Dorsolateral prefrontal cortex (tissue), 120 donors: ENCODE measurements at regions of chr7 and their contacts with region 1.

Region 1: DNA sequence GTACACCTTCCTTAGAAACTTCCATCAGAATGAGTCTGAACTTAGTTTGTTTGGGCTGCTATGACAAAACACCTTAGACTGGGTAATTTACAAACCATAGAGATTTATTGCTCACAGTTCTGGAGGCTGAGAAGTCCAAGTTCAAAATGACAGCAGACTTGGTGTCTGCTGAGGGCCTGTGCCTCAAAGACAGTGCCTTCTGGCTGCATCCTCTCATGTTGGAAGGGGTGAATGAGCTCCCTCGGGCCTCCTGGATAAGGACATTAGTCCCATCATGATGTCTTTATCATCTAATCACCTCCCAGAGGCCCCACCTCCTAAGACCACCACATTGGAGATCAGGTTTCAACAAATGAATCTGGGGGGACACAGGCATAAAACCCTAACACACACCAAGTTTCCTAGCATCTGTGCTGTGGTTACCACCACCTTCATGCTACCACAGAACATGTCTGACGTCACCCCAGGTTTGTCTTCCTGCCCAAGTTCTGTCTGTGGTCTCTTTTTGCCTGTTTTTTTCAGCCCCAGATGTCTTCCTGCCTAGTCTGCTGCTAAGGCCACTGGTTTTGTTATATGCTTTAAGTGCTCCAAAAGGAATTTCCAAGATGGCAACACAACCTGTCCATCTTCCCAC is 150.9 kb upstream of the COBL start:
- DNase-seq: no peak
- H3K4me3 ChIP-seq: no peak overlapping the region
- H3K27ac ChIP-seq: no peak overlapping the region
- H3K27me3 ChIP-seq: peaks cover 0 to 4% (median 0%) of the 10 kb centered on the region in 45 donors
- CTCF ChIP-seq: no peak

Region 2: DNA sequence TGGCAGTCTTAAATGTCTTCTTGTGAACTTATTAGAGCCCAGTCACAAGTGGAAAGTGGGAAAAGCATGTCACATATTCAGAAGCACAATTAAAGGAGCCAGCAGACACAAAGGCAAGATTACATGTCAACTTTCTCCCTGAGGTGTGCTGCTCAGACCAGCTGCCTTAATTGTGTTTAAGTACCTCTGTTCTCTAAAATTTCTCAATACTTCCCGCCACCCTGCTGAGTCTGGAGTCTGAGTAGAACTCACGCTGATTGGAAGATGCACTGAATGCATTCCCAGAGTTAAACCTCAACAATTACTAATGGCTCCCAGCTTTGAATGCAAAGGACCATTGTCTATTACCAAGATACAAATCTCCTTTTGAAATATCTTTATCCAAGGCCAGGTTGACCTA is 15.5 kb after region 1 on chr7:
- intact Hi-C with region 1: loop called in 1 of 2 experiments (anchors 2 kb)
- DNase-seq: no peak
- H3K4me3 ChIP-seq: no peak overlapping the region
- H3K27ac ChIP-seq: no peak overlapping the region
- H3K27me3 ChIP-seq: peaks cover 0 to 8% (median 0%) of the 10 kb centered on the region in 45 donors
- CTCF ChIP-seq: no peak

Region 3: DNA sequence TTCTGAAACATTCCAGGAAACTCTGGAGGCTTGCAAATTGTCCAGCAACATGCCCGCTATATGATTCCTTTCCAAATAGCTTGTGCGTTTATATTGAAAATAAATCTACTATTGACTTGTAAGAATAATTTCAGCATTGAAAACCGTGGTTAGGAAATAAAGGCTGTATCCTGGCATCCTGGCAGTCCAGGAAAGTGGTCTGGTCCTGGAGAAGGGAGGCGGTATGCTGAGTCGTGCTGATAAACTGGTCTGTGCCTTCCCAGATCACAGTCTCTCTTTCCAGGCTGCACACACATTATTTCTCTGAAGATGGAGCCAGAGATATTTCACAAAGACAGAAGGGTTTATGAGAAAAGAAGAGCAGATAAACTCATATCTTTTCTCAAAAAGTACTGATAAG is 199.2 kb after region 1 on chr7:
- intact Hi-C with region 1: no loop called
- DNase-seq: no peak
- H3K4me3 ChIP-seq: peak overlapping the region in 5 of 59 donors; percentile 1 to 24 (median 11)
- H3K27ac ChIP-seq: peak overlapping the region in 4 of 59 donors; percentile 0 to 37 (median 6)
- H3K27me3 ChIP-seq: peaks cover 0 to under 1% (median 0%) of the 10 kb centered on the region in 45 donors
- CTCF ChIP-seq: peak in 20 of 56 donors; percentile 7 to 44 (median 20)